ENCODE measurements at regions of chr16 and their contacts with region 1.

Region 1: DNA sequence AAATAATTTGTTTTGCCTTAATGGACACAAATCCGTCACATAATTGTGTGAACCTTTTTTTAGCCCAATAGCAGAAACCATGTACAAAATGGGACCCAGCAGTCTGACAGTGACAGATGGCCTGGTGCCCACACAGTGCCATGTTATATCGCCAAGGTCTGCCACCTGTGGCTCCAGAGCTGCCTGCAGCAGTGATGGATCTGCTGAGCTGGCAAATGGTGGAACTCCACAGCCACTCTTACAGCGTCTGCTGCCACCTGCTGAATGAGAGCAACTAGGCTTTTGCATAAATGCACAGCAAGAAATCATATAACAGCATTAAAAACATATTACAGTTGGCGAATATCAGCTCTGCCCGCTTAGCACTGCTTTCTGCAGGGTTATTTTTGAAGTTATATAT is 59.4 kb downstream of the NUP93 start:
- DNase-seq: peak; percentile 55
- H3K4me3 ChIP-seq: no peak overlapping the region
- H3K27ac ChIP-seq: no peak overlapping the region
- H3K4me1 ChIP-seq: peaks cover 4% of the 10 kb centered on the region
- H3K27me3 ChIP-seq: no peaks in the 10 kb centered on the region
- CTCF ChIP-seq: peak; percentile 6 to 53
- POLR2A ChIP-seq: no peak

Region 2: GRCh38 chr16:56576585-56577293 is 212.6 kb before region 1 on chr16:
- CTCF ChIA-PET with region 1: interaction called, 13 read pairs
- POLR2A ChIA-PET with region 1: no interaction called
- dilution Hi-C with region 1: no loop called
- intact Hi-C with region 1: loop called (anchors 1 kb)
- DNase-seq: peak; percentile 64
- H3K4me3 ChIP-seq: no peak overlapping the region
- H3K27ac ChIP-seq: no peak overlapping the region
- H3K4me1 ChIP-seq: no peaks in the 10 kb centered on the region
- H3K27me3 ChIP-seq: peaks cover 0 to 9% of the 10 kb centered on the region in 2 experiments
- CTCF ChIP-seq: peak; percentile 86 to 91
- POLR2A ChIP-seq: no peak

Region 3: DNA sequence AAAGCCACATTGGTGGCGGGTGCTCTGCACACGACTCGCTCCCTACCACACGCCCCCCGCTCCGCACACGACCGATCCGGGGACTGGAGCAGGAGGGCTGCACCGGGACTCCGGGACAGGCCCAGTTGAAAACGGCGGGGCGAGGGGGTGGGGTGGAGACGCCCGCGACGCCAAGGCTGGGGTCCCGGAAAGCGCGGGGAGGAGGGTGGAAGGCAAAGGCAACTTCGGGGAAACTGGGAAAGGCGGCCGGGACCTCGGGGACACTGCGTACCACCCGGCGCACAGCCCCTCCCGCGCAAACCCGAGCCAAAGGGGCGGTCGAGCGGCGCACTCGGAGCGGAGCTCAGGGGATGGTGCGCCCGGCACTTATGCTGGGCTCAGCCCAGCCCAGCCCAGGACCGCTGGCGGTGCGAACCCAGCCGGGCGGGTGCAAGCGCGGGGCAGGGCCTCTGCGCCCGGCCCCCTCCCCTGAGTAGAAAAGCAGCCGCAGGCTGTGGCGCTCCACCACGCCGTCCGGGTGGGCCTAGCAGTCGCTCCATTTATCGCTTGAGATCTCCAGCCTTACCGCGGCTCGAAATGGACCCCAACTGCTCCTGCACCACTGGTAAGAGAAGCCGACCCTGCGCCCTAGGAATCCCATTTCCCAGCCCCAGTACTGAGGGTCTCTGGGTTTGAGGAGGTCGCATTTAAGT is 157.1 kb before region 1 on chr16 and contains the start of gene MT1M:
- CTCF ChIA-PET with region 1: no interaction called
- POLR2A ChIA-PET with region 1: no interaction called
- dilution Hi-C with region 1: no loop called
- intact Hi-C with region 1: no loop called
- DNase-seq: no peak
- H3K4me3 ChIP-seq: peak within 1 kb of the TSS; percentile 25 to 42 (median 31)
- H3K27ac ChIP-seq: no peak within 1 kb of the TSS
- H3K4me1 ChIP-seq: peaks cover 16% of the 10 kb centered on the region
- H3K27me3 ChIP-seq: peaks cover 28 to 32% of the 10 kb centered on the region in 2 experiments
- CTCF ChIP-seq: no peak
- POLR2A ChIP-seq: no peak
- total RNA-seq, gene MT1M: 1.8 and 4.6 TPM in 2 replicates

Region 4: DNA sequence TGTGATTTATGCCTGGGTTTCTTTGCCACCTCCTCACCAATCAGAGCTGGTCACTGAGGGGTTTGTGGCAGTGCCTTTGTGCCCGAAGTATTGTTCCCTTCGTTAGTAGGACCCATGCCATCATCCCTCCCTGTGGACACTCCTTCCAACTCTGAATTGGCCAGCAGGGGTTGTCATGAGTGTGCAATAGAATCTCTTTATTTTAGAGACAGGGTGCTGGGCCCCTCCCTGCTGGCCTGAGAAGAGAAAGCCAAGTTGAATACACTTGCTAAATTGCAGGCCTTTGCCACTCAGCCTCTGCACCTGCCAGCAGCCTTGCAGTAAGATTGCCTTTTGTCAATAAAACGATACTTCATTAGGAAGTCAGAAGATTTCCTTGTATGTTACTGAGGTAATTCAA is 35.0 kb after region 1 on chr16:
- CTCF ChIA-PET with region 1: interaction called, 15 read pairs
- POLR2A ChIA-PET with region 1: no interaction called
- dilution Hi-C with region 1: no loop called
- intact Hi-C with region 1: no loop called
- DNase-seq: no peak
- H3K4me3 ChIP-seq: no peak overlapping the region
- H3K27ac ChIP-seq: no peak overlapping the region
- H3K4me1 ChIP-seq: no peaks in the 10 kb centered on the region
- H3K27me3 ChIP-seq: no peaks in the 10 kb centered on the region
- CTCF ChIP-seq: peak in 1 of 2 donors; percentile 7
- POLR2A ChIP-seq: no peak

Region 5: GRCh38 chr16:56851671-56852400 is 62.5 kb after region 1 on chr16:
- CTCF ChIA-PET with region 1: interaction called, 231 read pairs
- POLR2A ChIA-PET with region 1: no interaction called
- dilution Hi-C with region 1: no loop called
- intact Hi-C with region 1: loop called (anchors 1 kb)
- DNase-seq: peak; percentile 22
- H3K4me3 ChIP-seq: no peak overlapping the region
- H3K27ac ChIP-seq: no peak overlapping the region
- H3K4me1 ChIP-seq: peaks cover 32% of the 10 kb centered on the region
- H3K27me3 ChIP-seq: no peaks in the 10 kb centered on the region
- CTCF ChIP-seq: peak; percentile 34 to 44
- POLR2A ChIP-seq: no peak

Region 6: DNA sequence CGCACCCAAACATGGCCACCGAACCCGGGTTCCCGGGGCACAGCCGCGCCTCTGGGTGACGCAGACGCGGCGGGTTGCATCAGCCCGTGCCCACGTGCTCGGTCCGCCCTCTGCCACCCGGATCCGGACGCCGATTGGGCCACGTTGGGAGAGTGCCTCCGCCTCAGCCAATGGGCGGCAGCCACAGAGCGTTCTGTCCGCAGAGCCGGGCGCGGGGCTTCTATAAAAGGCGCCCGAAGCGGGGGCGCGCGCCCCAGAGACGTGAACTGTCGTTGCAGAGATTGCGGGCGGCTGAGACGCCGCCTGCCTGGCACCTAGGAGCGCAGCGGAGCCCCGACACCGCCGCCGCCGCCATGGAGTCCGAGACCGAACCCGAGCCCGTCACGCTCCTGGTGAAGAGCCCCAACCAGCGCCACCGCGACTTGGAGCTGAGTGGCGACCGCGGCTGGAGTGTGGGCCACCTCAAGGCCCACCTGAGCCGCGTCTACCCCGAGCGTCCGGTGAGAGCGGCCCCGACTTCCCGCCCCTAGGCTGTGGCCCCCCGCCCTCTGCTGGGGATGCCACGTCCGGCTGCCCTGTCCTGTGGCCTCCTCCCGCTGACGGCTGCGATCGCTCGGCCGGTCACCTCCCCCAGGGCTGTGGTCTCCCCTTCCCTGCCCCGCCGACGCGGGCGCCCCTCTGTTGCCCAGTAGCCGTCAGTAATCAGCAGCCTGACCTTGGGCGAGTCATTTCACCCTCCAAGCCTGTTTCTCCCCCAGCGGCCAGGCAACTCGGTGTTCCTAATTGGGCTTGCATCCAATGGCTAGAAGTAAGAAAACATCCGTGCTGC is 142.7 kb after region 1 on chr16 and contains the start of gene HERPUD1:
- CTCF ChIA-PET with region 1: interaction called, 18 read pairs
- POLR2A ChIA-PET with region 1: no interaction called
- dilution Hi-C with region 1: no loop called
- intact Hi-C with region 1: no loop called
- DNase-seq: peak; percentile 98
- H3K4me3 ChIP-seq: peak within 1 kb of the TSS; percentile 66 to 94 (median 85)
- H3K27ac ChIP-seq: peak within 1 kb of the TSS; percentile 80
- H3K4me1 ChIP-seq: peaks cover 26% of the 10 kb centered on the region
- H3K27me3 ChIP-seq: no peaks in the 10 kb centered on the region
- CTCF ChIP-seq: no peak
- POLR2A ChIP-seq: peak; percentile 99
- total RNA-seq, gene HERPUD1: 101 and 109 TPM in 2 replicates

Region 7: GRCh38 chr16:57039148-57039812 is 249.9 kb after region 1 on chr16:
- CTCF ChIA-PET with region 1: no interaction called
- POLR2A ChIA-PET with region 1: no interaction called
- dilution Hi-C with region 1: no loop called
- intact Hi-C with region 1: no loop called
- DNase-seq: peak; percentile 23
- H3K4me3 ChIP-seq: no peak overlapping the region
- H3K27ac ChIP-seq: peak overlapping the region; percentile 21
- H3K4me1 ChIP-seq: peaks cover 5% of the 10 kb centered on the region
- H3K27me3 ChIP-seq: no peaks in the 10 kb centered on the region
- CTCF ChIP-seq: no peak
- POLR2A ChIP-seq: no peak